ENCODE measurements at regions of chr10 and their contacts with region 1.

Region 1: GRCh38 chr10:125060826-125061556 is 99.4 kb downstream of the CTBP2 start:
- DNase-seq: peak; percentile 95
- H3K4me3 ChIP-seq: peak overlapping the region; percentile 10 to 30 (median 29)
- H3K27ac ChIP-seq: peak overlapping the region; percentile 85 to 87 (median 87)
- H3K4me1 ChIP-seq: peaks cover 99 to 100% (median 99%) of the 10 kb centered on the region in 4 donors
- H3K27me3 ChIP-seq: no peaks in the 10 kb centered on the region
- CTCF ChIP-seq: peak; percentile 83 to 91 (median 86)
- EP300 ChIP-seq: no peak
- POLR2A ChIP-seq: no peak

Region 2: DNA sequence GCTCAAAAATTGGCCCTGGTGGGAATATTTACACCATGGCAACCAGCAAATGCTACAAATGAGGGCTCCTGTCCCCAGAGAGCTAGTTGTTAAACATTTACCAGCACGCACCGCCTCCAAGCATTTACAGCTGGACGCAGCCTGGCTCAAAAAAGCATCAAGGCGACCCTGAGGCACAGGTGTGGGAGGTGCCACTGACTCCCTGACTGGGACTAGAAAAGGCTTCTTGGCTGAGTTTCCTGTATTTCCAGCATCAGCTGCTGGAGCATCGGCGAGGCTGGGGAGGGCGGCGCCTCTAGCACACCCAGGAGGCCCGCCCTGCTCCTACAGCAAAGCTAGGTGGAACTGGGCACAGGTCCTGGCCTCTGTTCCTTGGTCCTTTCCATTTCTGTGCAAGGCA is 162.5 kb before region 1 on chr10:
- intact Hi-C with region 1: no loop called
- DNase-seq: no peak
- H3K4me3 ChIP-seq: no peak overlapping the region
- H3K27ac ChIP-seq: no peak overlapping the region
- H3K4me1 ChIP-seq: no peaks in the 10 kb centered on the region
- H3K27me3 ChIP-seq: peaks cover 0 to 26% (median 0%) of the 10 kb centered on the region in 4 donors
- CTCF ChIP-seq: no peak
- EP300 ChIP-seq: no peak
- POLR2A ChIP-seq: no peak

Region 3: DNA sequence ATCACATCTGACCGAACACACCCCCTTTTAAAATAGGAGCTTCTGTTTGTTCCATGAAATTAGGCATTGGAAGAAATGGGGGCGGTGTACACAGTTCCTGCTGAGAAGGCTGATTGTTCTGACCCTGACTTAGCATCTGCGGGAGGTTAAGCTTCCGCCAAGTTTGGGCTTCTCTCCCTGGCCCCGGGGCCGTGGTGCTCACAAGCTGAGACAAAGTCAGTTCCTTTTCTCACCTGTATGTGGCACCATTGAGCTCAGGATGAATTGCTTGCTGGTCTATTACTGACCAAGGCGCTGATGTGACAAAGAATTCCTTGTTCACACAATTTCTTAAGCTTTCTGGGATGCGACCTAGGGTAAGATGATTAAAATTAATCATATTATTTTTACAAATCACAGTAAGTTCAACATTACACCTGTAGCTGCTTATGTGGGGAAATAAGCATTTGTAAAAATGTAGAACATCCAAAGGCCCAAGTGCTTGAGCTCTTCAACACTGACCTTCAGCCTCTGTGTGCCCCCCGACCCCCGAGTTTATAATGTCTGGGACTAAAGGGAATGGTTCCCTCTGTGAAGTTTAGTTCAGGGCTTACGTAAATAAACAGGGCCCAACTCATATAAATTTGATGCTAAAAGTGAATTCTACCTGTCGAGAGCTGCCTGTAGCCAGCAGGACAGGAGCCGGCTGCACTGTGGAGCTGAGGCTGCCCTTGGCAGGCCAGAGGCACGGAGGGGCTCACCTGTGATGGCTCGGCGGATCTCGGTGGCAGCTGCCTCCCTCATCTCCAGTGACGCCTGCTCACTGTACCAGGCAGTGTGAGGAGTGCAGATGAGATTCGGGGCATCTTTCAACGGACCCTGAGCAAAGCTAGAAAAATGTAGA is 68.3 kb before region 1 on chr10:
- intact Hi-C with region 1: loop called (anchors 5 kb)
- DNase-seq: peak; percentile 94
- H3K4me3 ChIP-seq: no peak overlapping the region
- H3K27ac ChIP-seq: peak overlapping the region in 2 of 4 donors; percentile 35 to 37
- H3K4me1 ChIP-seq: peaks cover 11 to 16% (median 14%) of the 10 kb centered on the region in 4 donors
- H3K27me3 ChIP-seq: no peaks in the 10 kb centered on the region
- CTCF ChIP-seq: peak; percentile 80 to 85 (median 84)
- EP300 ChIP-seq: no peak
- POLR2A ChIP-seq: no peak